ENCODE measurements at regions of chrX and their contacts with region 1.

Region 1: GRCh38 chrX:45070116-45071007 is 130.3 kb downstream of the DIPK2B start:
- DNase-seq: peak in 9 of 42 donors; percentile 2 to 46 (median 25)

Region 2: DNA sequence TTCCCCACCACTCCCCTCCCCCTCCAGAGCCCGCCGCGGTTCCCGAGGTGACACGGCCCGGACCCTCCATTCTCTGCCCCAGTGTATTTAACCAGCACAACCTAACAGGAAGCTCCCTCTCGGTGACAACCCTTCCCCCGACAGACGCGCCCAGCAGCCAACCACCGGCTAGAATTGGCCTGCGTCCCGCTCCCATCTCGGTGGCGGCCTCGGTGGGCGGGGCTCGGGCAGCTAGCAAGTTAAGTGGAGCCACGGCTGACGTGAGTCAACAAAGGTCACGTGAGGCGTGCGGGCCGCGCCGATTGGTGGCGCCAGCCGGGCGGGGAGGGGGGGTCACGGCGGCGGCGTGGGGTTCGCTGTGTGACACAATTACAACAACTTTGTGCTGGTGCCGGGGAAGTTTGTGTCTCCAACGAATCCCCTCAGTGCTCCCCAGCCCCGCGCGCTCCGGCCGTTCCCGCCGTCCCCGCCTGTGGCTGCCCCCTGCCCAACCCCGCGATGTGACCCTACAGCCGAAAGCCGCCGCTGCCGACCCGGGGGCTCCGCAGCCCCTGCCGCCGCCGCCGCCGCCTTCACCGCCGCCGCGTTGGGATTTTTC is 197.4 kb before region 1 on chrX and contains the start of gene KDM6A:
- intact Hi-C with region 1: loop called (anchors 5 kb)
- DNase-seq: peak; percentile 92 to 100 (median 100)

Measured in head of caudate nucleus (tissue), 42 donors.